HCT116 (cell line): ENCODE measurements at regions of chr1 and their contacts with region 1.

Region 1: DNA sequence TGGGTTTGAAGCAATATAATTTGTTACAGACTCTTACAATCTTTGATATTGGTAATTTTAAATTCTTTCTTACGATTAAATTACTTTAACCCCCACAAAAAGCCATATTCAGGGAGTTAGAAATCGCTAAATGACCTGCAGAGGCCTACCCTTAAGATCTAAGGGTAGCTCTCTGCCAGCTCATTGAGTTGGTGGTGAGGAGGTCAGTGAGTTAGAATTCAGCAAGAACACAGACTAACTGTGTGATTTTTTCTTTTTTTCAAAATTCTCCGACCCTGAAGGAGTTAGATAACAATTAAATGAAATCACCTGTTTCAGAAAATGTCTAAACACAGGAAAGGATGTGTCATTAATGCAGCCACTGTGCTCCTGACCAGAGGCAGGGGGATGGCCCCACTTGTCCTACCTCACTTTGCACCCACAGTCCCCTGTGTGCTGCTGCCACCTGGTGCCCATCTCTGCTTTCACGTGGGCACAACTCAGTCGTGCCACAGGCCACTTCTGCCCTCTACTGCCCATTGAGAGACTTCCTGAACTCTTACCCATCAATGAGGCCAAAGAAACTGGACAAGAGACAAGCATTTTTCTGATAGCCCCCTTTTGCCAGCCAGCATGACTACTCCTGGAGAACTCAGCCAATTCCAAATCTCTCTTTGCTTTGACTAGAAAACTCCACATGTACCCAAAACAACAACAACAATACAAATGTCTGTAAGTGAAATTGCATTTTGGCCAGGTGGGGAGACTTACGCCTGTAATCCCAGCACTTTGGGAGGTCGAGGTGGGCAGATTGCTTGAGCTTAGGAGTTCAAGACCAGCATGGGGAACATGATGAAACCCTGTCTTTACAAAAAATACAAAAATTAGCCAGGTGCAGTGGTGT is 8.4 kb downstream of the CFAP45 start:
- DNase-seq: peak; percentile 87
- ATAC-seq: peak; percentile 94
- H3K4me3 ChIP-seq: no peak overlapping the region
- H3K27ac ChIP-seq: no peak overlapping the region
- H3K4me1 ChIP-seq: peaks cover 11 to 23% of the 10 kb centered on the region in 2 experiments; a peak in 3 of 4 replicates
- H3K27me3 ChIP-seq: no peaks in the 10 kb centered on the region; the same call in 1 of the 2 replicates
- CTCF ChIP-seq: peak; percentile 99 to 100 (median 100)
- POLR2A ChIP-seq: no peak
- RAD21 ChIP-seq: peak; percentile 100

Region 2: GRCh38 chr1:159161001-159161718 is 730.4 kb before region 1 on chr1:
- CTCF ChIA-PET with region 1: no interaction called
- POLR2A ChIA-PET with region 1: no interaction called
- RAD21 ChIA-PET with region 1: no interaction called
- intact Hi-C with region 1: loop called (anchors 1 kb)
- DNase-seq: peak; percentile 50
- ATAC-seq: peak; percentile 95
- H3K4me3 ChIP-seq: no peak overlapping the region
- H3K27ac ChIP-seq: no peak overlapping the region
- H3K4me1 ChIP-seq: no peaks in the 10 kb centered on the region
- H3K27me3 ChIP-seq: peaks cover 11% of the 10 kb centered on the region
- CTCF ChIP-seq: peak; percentile 87 to 99 (median 95)
- POLR2A ChIP-seq: no peak
- RAD21 ChIP-seq: peak; percentile 91

Region 3: DNA sequence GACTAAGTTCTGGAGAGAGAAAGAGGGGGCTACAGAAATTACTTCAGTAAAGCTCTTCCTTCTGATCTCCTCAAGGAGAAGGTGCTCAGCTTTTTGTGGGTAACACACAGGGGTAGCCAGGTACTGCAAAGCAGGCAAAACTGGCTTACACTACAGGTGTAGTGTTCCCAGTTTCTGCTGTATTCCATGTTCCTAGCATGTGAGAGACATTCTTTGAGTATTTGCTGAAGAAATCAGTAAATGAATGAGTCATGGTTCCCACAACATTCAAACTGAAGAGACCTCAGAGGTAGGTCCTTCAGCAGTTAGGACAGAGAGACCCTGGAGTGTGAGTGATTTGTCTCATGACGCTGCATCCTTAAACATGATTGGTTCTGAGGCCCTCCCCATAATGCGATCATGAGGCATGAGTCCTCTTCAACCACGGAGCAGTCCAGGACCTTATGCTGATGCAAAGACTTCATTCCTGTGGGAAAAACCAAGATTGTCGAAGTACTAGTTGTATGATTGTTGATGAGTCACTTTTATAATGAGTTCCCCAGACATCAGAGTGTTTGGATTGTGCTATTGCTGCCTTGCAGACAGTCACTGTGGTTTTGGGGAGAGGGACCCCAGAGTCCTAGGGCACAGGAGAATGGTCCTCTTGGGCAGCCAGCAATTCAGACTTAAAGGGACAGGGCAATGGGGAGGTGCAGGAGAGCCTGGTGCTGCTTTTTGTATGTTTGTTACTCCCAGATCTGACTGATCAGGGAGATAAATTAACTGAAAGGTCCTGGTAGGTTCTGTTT is 462.2 kb before region 1 on chr1:
- CTCF ChIA-PET with region 1: no interaction called
- POLR2A ChIA-PET with region 1: no interaction called
- RAD21 ChIA-PET with region 1: no interaction called
- intact Hi-C with region 1: loop called (anchors 10 kb)
- DNase-seq: no peak
- ATAC-seq: no peak
- H3K4me3 ChIP-seq: no peak overlapping the region
- H3K27ac ChIP-seq: no peak overlapping the region
- H3K4me1 ChIP-seq: no peaks in the 10 kb centered on the region
- H3K27me3 ChIP-seq: peaks cover 21% of the 10 kb centered on the region
- CTCF ChIP-seq: no peak
- POLR2A ChIP-seq: no peak
- RAD21 ChIP-seq: no peak

Region 4: DNA sequence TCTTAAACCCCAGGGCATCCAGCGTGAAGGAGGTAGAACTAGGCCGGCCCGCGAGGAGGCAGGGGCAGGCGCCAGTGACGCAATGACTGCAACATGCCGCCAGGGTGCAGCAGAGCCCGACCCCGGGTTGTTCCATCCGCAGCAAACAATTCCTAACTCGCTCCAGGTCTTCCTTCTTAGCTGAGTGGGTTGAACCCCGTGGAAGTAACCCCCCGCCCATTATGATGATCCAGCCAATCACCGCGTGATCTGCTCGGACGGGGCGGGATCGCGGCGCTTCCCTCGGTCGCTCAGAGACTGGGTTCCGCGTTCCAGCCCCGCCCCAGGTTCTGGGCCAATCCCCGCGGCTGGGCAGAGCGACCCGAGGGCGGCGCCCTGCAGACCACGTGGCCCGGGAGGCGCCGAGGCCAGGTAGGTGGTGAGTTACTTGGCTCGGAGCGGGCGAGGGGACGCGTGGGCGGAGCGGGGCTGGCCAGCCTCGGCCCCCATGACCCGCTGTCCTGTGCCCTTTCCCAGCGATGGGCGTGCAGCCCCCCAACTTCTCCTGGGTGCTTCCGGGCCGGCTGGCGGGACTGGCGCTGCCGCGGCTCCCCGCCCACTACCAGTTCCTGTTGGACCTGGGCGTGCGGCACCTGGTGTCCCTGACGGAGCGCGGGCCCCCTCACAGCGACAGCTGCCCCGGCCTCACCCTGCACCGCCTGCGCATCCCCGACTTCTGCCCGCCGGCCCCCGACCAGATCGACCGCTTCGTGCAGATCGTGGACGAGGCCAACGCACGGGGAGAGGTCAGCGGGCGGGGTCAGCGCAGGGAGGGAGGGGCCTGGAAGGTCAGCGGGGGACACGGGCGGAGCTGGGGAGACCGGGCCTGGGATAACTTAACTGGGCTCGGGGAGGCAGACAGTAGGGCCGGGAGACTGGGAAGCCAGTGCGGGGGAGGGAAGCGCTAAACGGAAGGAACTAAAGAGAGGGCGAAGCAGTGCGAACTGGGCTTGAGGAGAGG is 110.6 kb before region 1 on chr1 and contains the start of gene DUSP23:
- CTCF ChIA-PET with region 1: interaction called, 44 read pairs
- POLR2A ChIA-PET with region 1: interaction called, 9 read pairs
- RAD21 ChIA-PET with region 1: interaction called, 3 to 15 read pairs
- intact Hi-C with region 1: loop called (anchors 1 kb)
- DNase-seq: peak; percentile 96
- ATAC-seq: peak; percentile 97
- H3K4me3 ChIP-seq: peak within 1 kb of the TSS; percentile 55 to 60
- H3K27ac ChIP-seq: peak within 1 kb of the TSS; percentile 65
- H3K4me1 ChIP-seq: peaks cover 3 to 21% of the 10 kb centered on the region in 2 experiments; a peak in 2 of 4 replicates
- H3K27me3 ChIP-seq: no peaks in the 10 kb centered on the region
- CTCF ChIP-seq: peak; percentile 89 to 97 (median 90)
- POLR2A ChIP-seq: no peak
- RAD21 ChIP-seq: peak; percentile 93
- total RNA-seq, gene DUSP23: 35.8 TPM

Region 5: GRCh38 chr1:159798893-159799292 is 92.6 kb before region 1 on chr1:
- CTCF ChIA-PET with region 1: interaction called, 229 read pairs
- POLR2A ChIA-PET with region 1: interaction called, 35 read pairs
- RAD21 ChIA-PET with region 1: interaction called, 17 to 38 read pairs
- intact Hi-C with region 1: loop called (anchors 1 kb)
- DNase-seq: peak; percentile 90
- ATAC-seq: peak; percentile 97
- H3K4me3 ChIP-seq: no peak overlapping the region
- H3K27ac ChIP-seq: no peak overlapping the region
- H3K4me1 ChIP-seq: no peaks in the 10 kb centered on the region
- H3K27me3 ChIP-seq: peaks cover 24% of the 10 kb centered on the region
- CTCF ChIP-seq: peak; percentile 83 to 99 (median 91)
- POLR2A ChIP-seq: no peak
- RAD21 ChIP-seq: peak; percentile 96

Region 6: DNA sequence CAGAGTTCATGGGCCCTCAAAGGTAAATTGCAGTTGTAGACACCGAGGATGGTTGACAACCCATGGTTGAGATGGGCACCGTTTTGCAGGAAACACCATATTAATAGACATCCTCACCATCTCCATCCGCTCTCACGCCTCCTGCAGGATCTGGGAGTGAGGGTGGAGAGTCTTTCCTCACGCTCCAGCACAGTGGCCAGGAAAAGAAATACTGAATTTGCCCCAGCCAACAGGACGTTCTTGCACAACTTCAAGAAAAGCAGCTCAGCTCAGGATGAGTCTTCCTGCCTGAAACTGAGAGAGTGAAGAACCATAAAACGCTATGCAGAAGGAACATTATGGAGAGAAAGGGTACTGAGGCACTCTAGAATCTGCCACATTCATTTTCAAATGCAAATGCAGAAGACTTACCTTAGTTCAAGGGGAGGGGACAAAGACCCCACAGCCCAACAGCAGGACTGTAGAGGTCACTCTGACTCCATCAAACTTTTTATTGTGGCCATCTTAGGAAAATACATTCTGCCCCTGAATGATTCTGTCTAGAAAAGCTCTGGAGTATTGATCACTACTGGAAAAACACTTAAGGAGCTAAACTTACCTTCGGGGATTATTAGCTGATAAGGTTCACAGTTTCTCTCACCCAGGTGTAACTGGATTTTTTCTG is 55.5 kb before region 1 on chr1:
- CTCF ChIA-PET with region 1: interaction called, 31 read pairs
- POLR2A ChIA-PET with region 1: no interaction called
- RAD21 ChIA-PET with region 1: interaction called, 5 read pairs
- intact Hi-C with region 1: loop called (anchors 1 kb)
- DNase-seq: no peak
- ATAC-seq: 0 out of 2 replicates have a peak, but pooled peaks have one; percentile 34
- H3K4me3 ChIP-seq: no peak overlapping the region
- H3K27ac ChIP-seq: no peak overlapping the region
- H3K4me1 ChIP-seq: peaks cover 0 to 14% of the 10 kb centered on the region in 2 experiments; a peak in 2 of 4 replicates
- H3K27me3 ChIP-seq: no peaks in the 10 kb centered on the region
- CTCF ChIP-seq: peak in 2 of 3 experiments; percentile 35 to 59; a peak in 3 of 6 replicates
- POLR2A ChIP-seq: no peak
- RAD21 ChIP-seq: peak; percentile 61